PC-9 (cell line): ENCODE measurements at regions of chr4 and their contacts with region 1.

Region 1: GRCh38 chr4:154421618-154422017 is 70.0 kb downstream of the DCHS2 start:
- DNase-seq: no peak
- H3K4me3 ChIP-seq: no peak overlapping the region
- H3K27ac ChIP-seq: no peak overlapping the region
- H3K4me1 ChIP-seq: no peaks in the 10 kb centered on the region
- H3K27me3 ChIP-seq: no peaks in the 10 kb centered on the region
- CTCF ChIP-seq: no peak

Region 2: DNA sequence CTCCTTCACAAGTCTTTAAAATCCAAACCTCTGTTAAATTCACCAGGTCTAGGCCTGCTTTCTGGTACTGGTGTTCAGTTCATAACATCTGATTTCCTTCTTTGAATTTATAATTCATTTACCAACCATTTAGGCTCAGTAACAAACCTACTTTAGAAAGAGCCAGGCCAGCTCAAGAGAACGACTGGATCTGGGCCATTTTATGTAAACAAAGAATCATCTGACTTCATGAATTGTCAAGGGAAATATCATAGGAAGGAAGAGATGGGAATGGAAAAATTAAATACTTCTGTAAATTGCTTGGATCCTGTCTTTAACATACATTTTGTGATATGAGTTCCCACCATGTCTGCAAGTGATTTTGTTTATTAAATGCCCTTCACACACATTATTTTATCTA is 33.5 kb after region 1 on chr4:
- CTCF ChIA-PET with region 1: no interaction called
- POLR2A ChIA-PET with region 1: no interaction called
- intact Hi-C with region 1: loop called (anchors 1 kb)
- DNase-seq: no peak
- H3K4me3 ChIP-seq: no peak overlapping the region
- H3K27ac ChIP-seq: no peak overlapping the region
- H3K4me1 ChIP-seq: no peaks in the 10 kb centered on the region
- H3K27me3 ChIP-seq: no peaks in the 10 kb centered on the region
- CTCF ChIP-seq: no peak